K562 (cell line): ENCODE measurements at regions of chr6 and their contacts with region 1.

Region 1: GRCh38 chr6:17610835-17611234 is 10.7 kb downstream of the FAM8A1 start:
- DNase-seq: no peak
- ATAC-seq: peak; percentile 26
- H3K4me3 ChIP-seq: no peak overlapping the region
- H3K27ac ChIP-seq: no peak overlapping the region
- H3K4me1 ChIP-seq: no peaks in the 10 kb centered on the region
- H3K27me3 ChIP-seq: no peaks in the 10 kb centered on the region
- CTCF ChIP-seq: no peak
- EP300 ChIP-seq: no peak
- POLR2A ChIP-seq: peak; percentile 21
- RAD21 ChIP-seq: no peak

Region 2: GRCh38 chr6:17318435-17319165 is 292.2 kb before region 1 on chr6:
- CTCF ChIA-PET with region 1: no interaction called
- POLR2A ChIA-PET with region 1: no interaction called
- in situ Hi-C with region 1: no loop called
- intact Hi-C with region 1: no loop called
- DNase-seq: no peak
- ATAC-seq: no peak
- H3K4me3 ChIP-seq: no peak overlapping the region
- H3K27ac ChIP-seq: no peak overlapping the region
- H3K4me1 ChIP-seq: no peaks in the 10 kb centered on the region
- H3K27me3 ChIP-seq: peaks cover 10 to 40% of the 10 kb centered on the region in 2 experiments; a peak in 4 of 5 replicates
- CTCF ChIP-seq: no peak
- EP300 ChIP-seq: no peak
- POLR2A ChIP-seq: no peak
- RAD21 ChIP-seq: no peak

Region 3: GRCh38 chr6:17599885-17600526 is 10.8 kb before region 1 on chr6 and contains the start of gene FAM8A1:
- CTCF ChIA-PET with region 1: interaction called, 5 read pairs
- POLR2A ChIA-PET with region 1: interaction called, 20 read pairs
- in situ Hi-C with region 1: no loop called
- intact Hi-C with region 1: no loop called
- DNase-seq: peak; percentile 97 to 99 (median 98)
- ATAC-seq: peak; percentile 92
- H3K4me3 ChIP-seq: peak within 1 kb of the TSS; percentile 88
- H3K27ac ChIP-seq: peak within 1 kb of the TSS; percentile 91
- H3K4me1 ChIP-seq: peaks cover 5 to 18% of the 10 kb centered on the region in 2 experiments; a peak in 4 of 5 replicates
- H3K27me3 ChIP-seq: no peaks in the 10 kb centered on the region
- CTCF ChIP-seq: peak; percentile 60 to 82 (median 60); a peak in 5 of 6 replicates
- EP300 ChIP-seq: peak; percentile 64
- POLR2A ChIP-seq: peak; percentile 90
- RAD21 ChIP-seq: no peak
- polyA plus RNA-seq, gene FAM8A1: 4.9 to 6.1 TPM

Region 4: GRCh38 chr6:17679726-17680125 is 68.9 kb after region 1 on chr6:
- CTCF ChIA-PET with region 1: no interaction called
- POLR2A ChIA-PET with region 1: no interaction called
- in situ Hi-C with region 1: no loop called
- intact Hi-C with region 1: no loop called
- DNase-seq: no peak
- ATAC-seq: 0 out of 3 replicates have a peak, but pooled peaks have one; percentile 16
- H3K4me3 ChIP-seq: no peak overlapping the region
- H3K27ac ChIP-seq: no peak overlapping the region
- H3K4me1 ChIP-seq: no peaks in the 10 kb centered on the region
- H3K27me3 ChIP-seq: no peaks in the 10 kb centered on the region
- CTCF ChIP-seq: no peak
- EP300 ChIP-seq: no peak
- POLR2A ChIP-seq: no peak
- RAD21 ChIP-seq: no peak